ENCODE measurements at regions of chr2 and their contacts with region 1.

Region 1: DNA sequence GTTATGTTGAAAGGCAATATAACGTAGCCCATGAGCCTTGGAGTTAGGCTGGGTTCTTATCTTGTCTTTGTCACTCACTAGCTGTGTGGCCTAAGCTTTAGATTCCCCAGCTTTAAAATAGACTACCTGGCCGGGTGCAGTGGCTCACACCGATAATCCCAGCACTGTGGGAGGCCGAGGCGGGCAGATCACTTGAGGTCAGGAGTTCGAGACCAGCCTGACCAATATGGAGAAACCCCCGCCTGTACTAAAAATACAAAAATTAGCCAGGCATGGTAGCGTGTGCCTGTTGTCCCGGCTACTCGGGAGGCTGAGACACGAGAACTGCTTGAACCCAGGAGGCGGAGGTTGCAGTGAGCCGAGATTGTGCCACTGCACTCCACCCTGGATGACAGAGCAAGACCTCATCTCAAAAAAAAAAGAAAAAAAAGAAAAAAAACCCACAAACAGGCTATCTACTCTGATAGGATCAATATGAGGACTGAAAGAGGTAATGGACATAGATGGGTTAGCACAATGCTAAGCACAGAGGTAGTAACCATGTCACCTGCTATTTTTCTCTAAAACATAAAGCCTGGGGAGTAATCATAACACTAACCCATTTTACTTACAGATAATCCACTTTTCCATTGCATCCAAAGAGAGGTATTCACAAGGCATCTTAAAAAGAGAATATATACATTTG is 43.9 kb downstream of the NCKAP1 start:
- DNase-seq: no peak
- ATAC-seq: peak in 1 of 8 donors; percentile 44
- H3K4me3 ChIP-seq: no peak overlapping the region
- H3K27ac ChIP-seq: no peak overlapping the region
- H3K4me1 ChIP-seq: no peaks in the 10 kb centered on the region
- H3K27me3 ChIP-seq: no peaks in the 10 kb centered on the region
- CTCF ChIP-seq: no peak

Region 2: DNA sequence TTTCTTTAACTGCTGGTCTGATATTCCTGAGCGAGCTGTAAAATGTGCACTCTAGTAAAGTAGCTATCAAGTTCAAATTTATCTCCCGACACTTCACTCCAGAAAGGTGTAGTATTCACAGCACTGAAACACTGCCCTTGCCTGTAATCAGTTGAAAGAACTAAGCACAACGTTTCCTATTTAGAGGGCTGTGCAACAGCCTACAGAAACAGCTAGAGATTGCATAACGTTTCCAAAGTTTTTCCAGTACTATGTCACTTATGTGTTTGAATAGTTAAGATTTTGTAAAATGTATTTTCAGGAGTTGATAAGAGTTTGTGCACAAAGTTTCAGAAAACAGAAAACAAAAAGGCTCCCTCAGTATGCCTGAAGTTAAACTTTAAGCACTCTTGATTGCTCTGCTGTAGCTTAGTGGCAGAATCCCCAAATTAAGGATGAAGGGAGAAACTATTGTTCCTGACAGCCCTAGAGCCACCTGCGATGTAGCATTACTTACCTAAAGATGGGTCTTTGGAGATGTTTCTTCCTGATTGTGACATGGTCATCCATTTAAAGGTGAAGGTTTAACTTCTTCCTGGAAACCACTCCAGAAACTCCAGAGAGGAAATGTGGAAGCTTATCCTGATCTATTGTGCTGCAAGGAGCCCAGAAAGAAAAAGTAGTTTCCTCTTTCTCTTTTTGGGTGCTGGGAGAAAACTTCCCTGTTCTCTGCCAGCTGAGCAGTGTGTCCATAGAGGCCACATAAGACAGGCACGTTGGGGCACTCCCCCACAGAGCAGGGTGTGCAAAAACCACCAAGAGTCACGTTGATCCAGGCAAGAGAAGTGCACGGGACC is 568.1 kb before region 1 on chr2:
- intact Hi-C with region 1: no loop called
- DNase-seq: no peak
- ATAC-seq: peak; percentile 36 to 85 (median 66)
- H3K4me3 ChIP-seq: peak overlapping the region; percentile 11 to 61 (median 52)
- H3K27ac ChIP-seq: peak overlapping the region; percentile 11 to 82 (median 74)
- H3K4me1 ChIP-seq: peaks cover 0 to 13% (median 0%) of the 10 kb centered on the region in 9 donors
- H3K27me3 ChIP-seq: no peaks in the 10 kb centered on the region
- CTCF ChIP-seq: no peak

Region 3: GRCh38 chr2:182929972-182930371 is 64.4 kb before region 1 on chr2:
- intact Hi-C with region 1: loop called in 1 of 10 experiments (anchors 2 kb)
- DNase-seq: no peak
- ATAC-seq: no peak
- H3K4me3 ChIP-seq: no peak overlapping the region
- H3K27ac ChIP-seq: no peak overlapping the region
- H3K4me1 ChIP-seq: no peaks in the 10 kb centered on the region
- H3K27me3 ChIP-seq: no peaks in the 10 kb centered on the region
- CTCF ChIP-seq: no peak

Region 4: DNA sequence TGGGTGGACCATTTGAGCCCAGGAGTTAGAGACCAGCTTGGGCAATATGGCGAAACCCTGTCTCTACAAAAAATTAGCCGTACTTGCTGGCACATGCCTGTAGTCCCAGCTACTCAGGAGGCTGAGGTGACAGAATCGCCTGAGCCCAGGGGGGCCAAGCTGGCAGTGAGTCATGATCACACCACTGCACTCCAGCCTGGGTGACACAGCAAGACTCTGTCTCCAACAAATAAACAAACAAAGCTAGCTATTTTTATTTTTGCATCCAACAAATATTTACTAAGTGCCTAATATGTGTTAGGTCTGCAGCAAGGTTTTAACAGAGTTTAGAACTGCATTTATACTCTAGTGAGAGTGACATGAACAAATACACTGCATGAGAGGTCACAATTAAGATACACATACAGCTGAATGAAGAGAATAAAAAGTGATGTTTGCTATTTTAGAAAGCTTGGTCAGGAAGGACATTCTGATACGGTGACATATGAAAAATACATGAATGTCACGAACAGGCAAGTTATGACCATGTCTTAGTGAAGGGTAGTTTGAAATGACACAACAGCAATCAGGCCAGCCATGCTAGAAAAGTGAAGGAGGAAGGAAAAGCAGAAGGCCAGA is 44.7 kb before region 1 on chr2:
- intact Hi-C with region 1: loop called in 1 of 10 experiments (anchors 1 kb)
- DNase-seq: peak; percentile 19 to 24
- ATAC-seq: peak in 7 of 8 donors; percentile 53 to 91 (median 84)
- H3K4me3 ChIP-seq: no peak overlapping the region
- H3K27ac ChIP-seq: peak overlapping the region in 8 of 10 donors; percentile 9 to 60 (median 34)
- H3K4me1 ChIP-seq: peaks cover 0 to 27% (median 11%) of the 10 kb centered on the region in 9 donors
- H3K27me3 ChIP-seq: no peaks in the 10 kb centered on the region
- CTCF ChIP-seq: no peak

Region 5: DNA sequence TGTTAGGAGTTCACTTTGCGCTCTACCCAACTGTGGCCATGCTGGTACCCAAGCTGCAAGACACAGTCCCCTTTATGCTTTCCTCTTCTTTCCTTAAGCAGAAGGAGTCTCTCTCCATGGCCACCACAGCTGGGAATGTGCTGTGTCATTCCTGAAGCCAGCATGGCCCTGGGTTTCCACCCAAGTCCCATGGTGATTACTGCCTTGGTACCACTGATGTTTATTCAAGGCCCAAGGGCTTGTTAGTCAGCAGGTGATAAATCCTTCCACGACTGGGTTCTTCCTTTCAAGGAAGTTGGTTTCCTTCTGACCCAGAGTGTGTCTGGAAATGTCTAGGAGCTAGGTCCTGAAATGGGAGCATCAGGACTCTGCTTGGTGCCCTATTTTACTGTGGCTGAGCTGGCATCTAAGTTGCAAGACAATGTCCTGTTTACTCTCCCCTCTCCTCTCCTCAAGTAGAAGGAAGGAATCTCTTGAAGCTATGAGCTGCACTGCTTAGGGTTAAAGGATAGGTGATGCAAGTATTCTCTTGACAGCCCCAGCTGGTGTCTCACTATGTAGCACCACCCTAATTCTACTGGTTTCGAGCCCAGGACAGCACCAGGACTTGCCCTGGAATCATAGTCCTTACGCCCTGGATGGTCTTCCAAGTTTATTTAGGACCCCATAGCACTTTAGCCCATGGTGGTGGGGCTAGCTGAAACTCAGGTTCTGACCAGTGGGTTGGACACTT is 111.2 kb after region 1 on chr2:
- intact Hi-C with region 1: no loop called
- DNase-seq: no peak
- ATAC-seq: no peak
- H3K4me3 ChIP-seq: no peak overlapping the region
- H3K27ac ChIP-seq: no peak overlapping the region
- H3K4me1 ChIP-seq: no peaks in the 10 kb centered on the region
- H3K27me3 ChIP-seq: no peaks in the 10 kb centered on the region
- CTCF ChIP-seq: no peak

Region 6: GRCh38 chr2:183179156-183179555 is 184.8 kb after region 1 on chr2:
- intact Hi-C with region 1: no loop called
- DNase-seq: no peak
- ATAC-seq: no peak
- H3K4me3 ChIP-seq: no peak overlapping the region
- H3K27ac ChIP-seq: no peak overlapping the region
- H3K4me1 ChIP-seq: no peaks in the 10 kb centered on the region
- H3K27me3 ChIP-seq: no peaks in the 10 kb centered on the region
- CTCF ChIP-seq: no peak